ENCODE measurements at regions of chr22 and their contacts with region 1.

Region 1: DNA sequence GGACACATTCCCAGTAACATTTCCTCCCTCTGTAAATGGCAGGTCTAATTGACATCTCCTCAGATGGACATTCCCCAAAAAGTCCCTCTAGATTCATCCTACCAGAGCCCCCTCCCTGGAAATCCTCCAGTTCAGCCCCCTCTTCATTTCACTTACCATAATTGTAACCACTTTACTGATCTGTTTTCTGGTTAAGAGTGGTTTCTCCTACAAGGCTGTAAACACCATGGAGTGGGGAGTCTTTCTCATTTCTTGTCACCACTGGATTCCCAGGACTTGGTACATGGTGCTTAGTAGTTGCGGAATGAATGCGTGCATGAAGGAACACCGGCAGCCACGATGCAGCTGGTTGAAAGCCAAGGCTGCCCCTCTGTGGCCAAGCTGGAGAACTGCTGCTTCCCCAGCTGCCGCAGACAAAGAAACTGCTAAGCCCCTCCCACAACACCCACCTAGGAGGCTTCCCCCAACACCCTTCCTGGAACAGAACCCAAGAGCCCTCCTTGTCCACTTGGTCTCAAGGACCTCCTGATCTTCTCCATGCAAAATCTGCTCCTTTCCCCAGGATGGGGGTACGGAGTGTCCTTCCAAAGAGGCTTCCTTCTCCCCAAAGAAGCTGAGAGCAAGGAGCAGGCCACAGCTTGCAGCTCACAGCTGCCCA is 18.6 kb upstream of the SCARF2 start:
- DNase-seq: peak; percentile 78
- H3K4me3 Mint-ChIP-seq: no peak overlapping the region
- H3K27ac Mint-ChIP-seq: no peak overlapping the region
- H3K4me1 Mint-ChIP-seq: peaks cover 27% of the 10 kb centered on the region
- H3K27me3 Mint-ChIP-seq: no peaks in the 10 kb centered on the region

Region 2: DNA sequence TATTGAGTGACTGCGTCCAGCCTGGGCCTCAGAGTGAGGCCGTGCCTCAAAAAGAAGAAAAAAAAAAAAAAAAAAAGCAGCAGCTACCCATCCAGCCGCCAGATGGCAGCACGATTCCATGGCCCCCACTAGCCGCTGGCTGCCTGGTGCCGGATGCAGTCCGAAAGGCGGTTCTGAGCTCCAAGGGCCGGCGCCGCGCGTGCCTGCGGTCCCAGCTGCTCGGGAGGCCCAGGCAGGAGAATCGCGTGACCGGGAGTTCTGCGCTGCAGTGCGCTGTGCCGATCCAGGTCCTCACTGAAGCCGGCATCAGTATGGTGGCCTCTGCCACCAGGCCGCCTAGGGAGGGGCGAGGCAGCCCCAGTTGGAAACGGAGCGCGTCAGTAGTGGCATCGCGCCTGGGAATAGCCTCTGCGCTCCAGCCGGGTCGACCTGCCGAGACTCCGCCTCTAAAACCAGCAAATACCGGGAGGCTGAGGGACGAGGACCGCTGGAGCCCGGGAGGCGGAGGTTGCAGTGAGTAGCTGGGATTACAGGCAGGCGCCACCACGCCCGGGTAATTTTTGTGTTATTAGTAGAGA is 37.9 kb before region 1 on chr22:
- CTCF ChIA-PET with region 1: interaction called, 12 read pairs
- POLR2A ChIA-PET with region 1: interaction called, 3 read pairs
- DNase-seq: peak; percentile 78
- H3K4me3 Mint-ChIP-seq: no peak overlapping the region
- H3K27ac Mint-ChIP-seq: no peak overlapping the region
- H3K4me1 Mint-ChIP-seq: peaks cover 6% of the 10 kb centered on the region
- H3K27me3 Mint-ChIP-seq: peaks cover 12% of the 10 kb centered on the region